Heart left ventricle (tissue), 16 donors: ENCODE measurements at regions of chr3 and their contacts with region 1.

Region 1: GRCh38 chr3:12841149-12841970 is at the start of gene RPL32:
- DNase-seq: peak; percentile 88 to 92 (median 90)
- ATAC-seq: peak; percentile 92 to 98 (median 96)
- H3K4me3 ChIP-seq: peak within 1 kb of the TSS; percentile 33 to 89 (median 70)
- H3K27ac ChIP-seq: peak within 1 kb of the TSS; percentile 82 to 97 (median 92)
- H3K4me1 ChIP-seq: peaks cover 0 to 45% (median 29%) of the 10 kb centered on the region in 12 donors
- H3K27me3 ChIP-seq: no peaks in the 10 kb centered on the region
- CTCF ChIP-seq: peak; percentile 75 to 93 (median 86)
- POLR2A ChIP-seq: peak in 1 of 2 donors; percentile 79
- total RNA-seq, gene RPL32: 377 to 1,128 (median 947) TPM

Region 2: DNA sequence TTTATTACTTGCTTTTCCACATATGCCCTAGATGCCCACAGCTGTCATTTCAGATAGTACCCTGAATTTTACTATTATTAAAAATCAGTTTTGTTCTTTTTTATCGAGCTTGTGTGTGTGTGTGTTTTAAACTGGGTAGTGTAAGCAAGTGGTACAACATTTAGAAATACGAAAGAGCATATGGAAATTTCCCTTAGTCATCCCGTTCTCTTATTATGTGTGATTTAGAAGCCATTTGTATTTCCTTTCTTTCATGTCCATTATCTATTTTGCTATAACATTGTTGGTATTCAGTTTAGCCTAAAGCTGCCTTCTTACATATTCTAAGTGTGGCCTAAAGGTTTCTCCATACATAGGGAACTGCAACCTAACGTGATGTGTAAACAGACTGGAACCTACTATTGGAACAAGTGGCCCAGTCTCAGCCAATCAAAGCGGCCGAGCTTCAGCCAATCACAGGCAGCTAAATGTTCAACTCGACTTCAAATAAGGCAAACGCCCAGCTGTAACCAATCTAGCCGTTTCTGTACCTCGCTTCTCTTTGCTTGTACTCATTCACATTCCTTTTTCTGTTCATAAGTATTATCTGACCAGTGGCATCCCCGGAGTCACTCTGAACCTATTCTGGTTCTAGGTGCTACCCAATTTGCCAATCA is 851.8 kb before region 1 on chr3:
- intact Hi-C with region 1: no loop called
- DNase-seq: no peak
- ATAC-seq: no peak
- H3K4me3 ChIP-seq: no peak overlapping the region
- H3K27ac ChIP-seq: no peak overlapping the region
- H3K4me1 ChIP-seq: no peaks in the 10 kb centered on the region
- H3K27me3 ChIP-seq: peaks cover 0 to 26% (median 3%) of the 10 kb centered on the region in 9 donors
- CTCF ChIP-seq: no peak
- POLR2A ChIP-seq: no peak

Region 3: GRCh38 chr3:12601072-12601471 is 240.3 kb before region 1 on chr3:
- intact Hi-C with region 1: no loop called
- DNase-seq: no peak
- ATAC-seq: no peak
- H3K4me3 ChIP-seq: no peak overlapping the region
- H3K27ac ChIP-seq: peak overlapping the region in 1 of 12 donors; percentile 20
- H3K4me1 ChIP-seq: peaks cover 0 to 8% (median 0%) of the 10 kb centered on the region in 12 donors
- H3K27me3 ChIP-seq: no peaks in the 10 kb centered on the region
- CTCF ChIP-seq: peak in 6 of 12 donors; percentile 11 to 41 (median 19)
- POLR2A ChIP-seq: no peak

Region 4: GRCh38 chr3:12782172-12782815 is 59.1 kb before region 1 on chr3:
- intact Hi-C with region 1: loop called in 4 of 10 experiments (anchors 2 to 5 kb)
- DNase-seq: no peak
- ATAC-seq: peak; percentile 32 to 84 (median 80)
- H3K4me3 ChIP-seq: no peak overlapping the region
- H3K27ac ChIP-seq: no peak overlapping the region
- H3K4me1 ChIP-seq: peaks cover 0 to 5% (median 0%) of the 10 kb centered on the region in 12 donors
- H3K27me3 ChIP-seq: peaks cover 0 to 4% (median 0%) of the 10 kb centered on the region in 9 donors
- CTCF ChIP-seq: no peak
- POLR2A ChIP-seq: no peak

Region 5: DNA sequence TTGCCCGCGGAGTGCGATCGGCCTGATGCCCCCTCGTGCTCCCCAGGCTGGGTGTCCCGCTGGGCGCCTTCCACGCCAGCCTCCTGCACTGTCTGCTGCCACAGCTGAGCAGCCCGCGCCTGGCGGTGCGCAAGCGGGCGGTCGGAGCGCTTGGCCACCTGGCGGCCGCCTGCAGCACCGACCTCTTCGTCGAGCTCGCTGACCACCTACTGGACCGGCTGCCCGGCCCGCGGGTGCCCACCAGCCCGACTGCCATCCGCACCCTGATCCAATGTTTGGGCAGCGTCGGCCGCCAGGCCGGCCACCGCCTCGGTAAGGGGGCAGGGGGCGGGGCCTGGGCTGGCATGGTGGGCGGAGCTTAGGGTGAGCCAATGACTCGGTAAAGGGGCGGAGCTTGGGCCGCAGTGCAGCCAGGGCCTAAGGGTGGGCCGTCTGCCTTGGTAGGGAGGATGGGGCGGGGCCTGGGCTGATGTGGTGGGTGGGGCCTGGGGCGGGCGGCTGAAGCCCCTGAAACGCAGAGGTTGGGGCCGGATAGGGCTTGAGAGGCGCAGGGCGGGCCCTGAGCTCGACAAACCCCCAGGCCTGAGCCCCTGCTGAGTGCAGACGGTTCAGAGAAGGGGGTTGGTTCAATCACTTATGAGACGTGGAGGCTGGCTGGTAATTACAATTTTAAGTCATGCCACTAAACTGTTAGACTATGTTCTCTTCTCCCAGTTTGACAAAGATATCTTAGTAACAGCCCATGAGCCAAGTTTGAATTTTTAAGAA is 31.2 kb before region 1 on chr3:
- intact Hi-C with region 1: loop called in 1 of 10 experiments (anchors 1 kb)
- DNase-seq: peak; percentile 95 to 98 (median 96)
- ATAC-seq: peak; percentile 98 to 99 (median 98)
- H3K4me3 ChIP-seq: peak overlapping the region; percentile 37 to 71 (median 66)
- H3K27ac ChIP-seq: peak overlapping the region in 11 of 12 donors; percentile 43 to 80 (median 75)
- H3K4me1 ChIP-seq: peaks cover 0 to 42% (median 17%) of the 10 kb centered on the region in 12 donors
- H3K27me3 ChIP-seq: no peaks in the 10 kb centered on the region
- CTCF ChIP-seq: peak; percentile 55 to 96 (median 74)
- POLR2A ChIP-seq: peak in 1 of 2 donors; percentile 77